Posterior vena cava (tissue), 2 donors: ENCODE measurements at regions of chr9 and their contacts with region 1.

Region 1: GRCh38 chr9:114549697-114550330 is 37.8 kb upstream of the ATP6V1G1 start:
- DNase-seq: no peak

Region 2: GRCh38 chr9:116300336-116300870 is 1750.6 kb after region 1 on chr9:
- intact Hi-C with region 1: loop called in 1 of 2 experiments (anchors 5 kb)
- DNase-seq: no peak